HepG2 (cell line): ENCODE measurements at regions of chr11 and their contacts with region 1.

Region 1: GRCh38 chr11:8728563-8728962 is 46.0 kb downstream of the RPL27A start:
- DNase-seq: no peak
- ATAC-seq: no peak
- H3K4me3 ChIP-seq: no peak overlapping the region
- H3K27ac ChIP-seq: no peak overlapping the region
- H3K4me1 ChIP-seq: peaks cover 13% of the 10 kb centered on the region
- H3K27me3 ChIP-seq: no peaks in the 10 kb centered on the region
- CTCF ChIP-seq: no peak
- EP300 ChIP-seq: no peak
- POLR2A ChIP-seq: no peak
- RAD21 ChIP-seq: no peak

Region 2: DNA sequence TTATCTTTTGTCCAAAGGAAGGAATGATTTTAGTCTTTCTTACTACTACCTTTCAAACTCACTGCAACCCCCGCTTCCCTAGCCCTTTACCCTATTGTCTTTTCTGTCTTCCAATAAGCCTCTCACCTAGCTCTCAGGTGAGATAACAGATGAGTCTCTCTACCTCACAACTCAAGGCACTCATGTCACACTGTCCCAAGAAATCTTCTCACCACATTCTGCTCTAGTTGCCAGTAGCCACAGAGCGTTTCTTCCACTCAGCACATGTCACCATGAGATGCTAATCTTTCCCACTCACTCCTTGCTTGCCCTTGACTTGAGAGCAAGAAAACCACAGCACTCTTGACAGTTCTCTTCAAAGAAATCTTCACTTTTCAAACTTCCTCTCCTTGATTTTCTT is 618.5 kb after region 1 on chr11:
- CTCF ChIA-PET with region 1: no interaction called
- POLR2A ChIA-PET with region 1: no interaction called
- in situ Hi-C with region 1: no loop called
- intact Hi-C with region 1: loop called (anchors 5 kb)
- DNase-seq: no peak
- ATAC-seq: no peak
- H3K4me3 ChIP-seq: no peak overlapping the region
- H3K27ac ChIP-seq: no peak overlapping the region
- H3K4me1 ChIP-seq: peaks cover 26% of the 10 kb centered on the region
- H3K27me3 ChIP-seq: no peaks in the 10 kb centered on the region; a peak in 2 of 5 replicates
- CTCF ChIP-seq: no peak
- EP300 ChIP-seq: no peak
- POLR2A ChIP-seq: no peak
- RAD21 ChIP-seq: no peak